A673 (cell line): ENCODE measurements at regions of chr16 and their contacts with region 1.

Region 1: GRCh38 chr16:46789499-46790414 is 41.2 kb downstream of the C16orf87 start:
- DNase-seq: peak; percentile 70
- H3K4me3 ChIP-seq: peak overlapping the region; percentile 58
- H3K27ac ChIP-seq: peak overlapping the region; percentile 27
- H3K4me1 ChIP-seq: no peaks in the 10 kb centered on the region
- H3K27me3 ChIP-seq: no peaks in the 10 kb centered on the region
- CTCF ChIP-seq: no peak

Region 2: DNA sequence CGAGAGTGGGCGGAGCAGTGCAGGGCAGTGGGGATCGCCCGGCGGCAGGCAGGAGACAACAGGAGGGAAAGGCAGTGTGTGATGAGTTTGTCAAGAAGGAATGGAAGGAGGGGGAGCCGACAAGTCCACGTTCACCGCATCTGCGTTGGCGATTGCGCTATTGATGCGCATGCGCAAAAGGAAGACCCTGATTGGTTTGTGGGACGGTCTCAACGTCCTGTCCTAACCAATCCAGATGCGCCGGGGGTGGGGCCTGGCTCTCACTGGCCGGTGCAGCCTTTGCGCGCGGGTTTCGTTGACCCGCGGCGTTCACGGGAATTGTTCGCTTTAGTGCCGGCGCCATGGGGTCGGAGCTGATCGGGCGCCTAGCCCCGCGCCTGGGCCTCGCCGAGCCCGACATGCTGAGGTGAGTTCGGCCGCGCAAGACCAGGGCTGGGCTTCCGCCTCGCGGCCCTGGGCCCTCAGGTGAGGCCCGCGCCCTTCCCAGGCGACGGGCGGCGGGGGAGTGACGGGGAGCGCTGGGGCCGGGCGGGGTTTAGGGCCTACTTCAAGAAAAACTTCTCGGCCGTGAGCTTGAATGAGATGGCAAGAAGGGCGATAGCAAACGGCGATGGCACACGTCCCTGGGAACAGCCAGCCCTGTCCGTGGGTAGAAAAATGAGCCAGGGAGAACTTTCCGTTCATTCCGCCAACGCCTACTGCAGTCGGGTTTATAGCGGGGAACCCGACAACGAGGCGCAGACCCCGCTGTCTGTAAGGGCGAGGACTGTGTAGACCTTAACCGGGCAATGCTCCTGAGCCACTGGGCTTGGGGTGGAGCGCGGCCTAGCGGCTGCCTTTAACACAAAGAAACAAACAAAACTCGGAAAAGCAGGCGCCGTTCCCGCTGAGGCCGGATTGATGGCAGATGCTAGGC is 100.1 kb before region 1 on chr16 and contains the start of gene ORC6:
- CTCF ChIA-PET with region 1: no interaction called
- POLR2A ChIA-PET with region 1: no interaction called
- intact Hi-C with region 1: loop called (anchors 10 kb)
- DNase-seq: peak; percentile 98
- H3K4me3 ChIP-seq: peak within 1 kb of the TSS; percentile 84
- H3K27ac ChIP-seq: peak within 1 kb of the TSS; percentile 94
- H3K4me1 ChIP-seq: peaks cover 16% of the 10 kb centered on the region
- H3K27me3 ChIP-seq: no peaks in the 10 kb centered on the region
- CTCF ChIP-seq: peak; percentile 59
- total RNA-seq, gene ORC6: 86.2 and 95.1 TPM in 2 replicates

Region 3: DNA sequence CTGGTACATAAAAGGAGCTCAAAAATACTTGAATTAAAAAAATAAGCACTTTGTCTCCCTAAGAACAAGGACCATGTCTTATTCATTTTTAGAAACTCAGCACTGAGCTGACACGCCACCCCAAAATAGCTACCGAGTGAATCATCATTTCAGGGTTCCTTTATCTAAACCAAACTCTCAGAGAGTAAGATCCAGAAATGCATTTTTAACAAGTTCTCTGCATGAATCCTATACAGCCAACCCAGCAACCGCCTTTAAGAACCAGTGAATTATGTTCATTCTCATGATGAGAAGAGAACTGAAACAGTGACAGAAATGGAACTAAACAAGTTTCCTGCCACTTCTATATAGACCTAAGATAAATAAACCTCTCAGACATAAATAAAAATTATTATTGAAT is 32.5 kb after region 1 on chr16:
- CTCF ChIA-PET with region 1: no interaction called
- POLR2A ChIA-PET with region 1: no interaction called
- intact Hi-C with region 1: no loop called
- DNase-seq: peak; percentile 26
- H3K4me3 ChIP-seq: no peak overlapping the region
- H3K27ac ChIP-seq: peak overlapping the region; percentile 13
- H3K4me1 ChIP-seq: peaks cover 15% of the 10 kb centered on the region
- H3K27me3 ChIP-seq: no peaks in the 10 kb centered on the region
- CTCF ChIP-seq: no peak